Naive thymus-derived CD4-positive, alpha-beta T cell (primary cell): ENCODE measurements at regions of chr13 and their contacts with region 1.

Region 1: DNA sequence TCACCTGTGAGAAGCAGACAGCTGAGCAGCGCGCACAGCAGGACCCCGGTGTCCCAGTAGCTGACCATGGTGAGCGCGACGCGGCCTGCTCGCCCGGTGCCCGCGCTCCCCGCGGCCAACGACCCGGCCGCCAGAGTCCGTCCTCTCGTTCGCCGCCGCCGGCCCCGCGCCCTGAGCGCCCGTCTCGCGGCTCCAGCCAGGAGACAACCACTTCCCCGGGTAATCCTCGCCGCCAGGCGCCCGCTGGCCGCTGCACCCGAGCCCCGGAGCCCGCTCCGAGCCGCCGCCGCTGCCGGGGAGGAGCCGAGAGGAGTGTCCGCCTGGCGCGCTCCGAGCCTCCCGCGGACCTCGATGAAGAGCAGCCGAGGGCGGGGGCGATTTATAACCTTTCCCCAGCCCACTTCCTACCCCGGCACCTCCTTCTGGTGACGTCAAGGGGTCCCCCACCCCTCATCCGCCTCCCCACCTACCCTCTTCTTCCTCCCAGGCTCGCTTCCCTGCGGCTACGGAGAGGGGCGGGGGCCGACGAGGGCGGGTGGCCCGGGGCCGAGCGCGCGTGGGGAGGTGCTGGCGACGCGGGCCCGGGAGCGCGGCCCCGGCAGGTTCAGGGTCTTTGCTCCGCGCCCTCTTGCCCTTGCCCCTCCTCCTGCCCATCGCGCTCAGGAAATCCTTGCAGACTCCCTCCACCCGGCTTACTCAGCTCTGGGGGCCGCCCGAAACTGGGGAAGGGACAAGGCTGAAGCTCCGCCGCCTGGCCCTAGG is at the start of gene FLT1:
- DNase-seq: peak; percentile 27 to 65 (median 55)
- ATAC-seq: peak; percentile 39
- H3K4me3 ChIP-seq: peak within 1 kb of the TSS; percentile 44
- H3K4me3 Mint-ChIP-seq: peak within 1 kb of the TSS; percentile 23 to 85 (median 74)
- H3K27ac ChIP-seq: peak within 1 kb of the TSS; percentile 30
- H3K27ac Mint-ChIP-seq: peak within 1 kb of the TSS in 5 of 9 donors; percentile 28 to 76 (median 61)
- H3K4me1 ChIP-seq: peaks cover 0 to 13% of the 10 kb centered on the region in 2 donors
- H3K4me1 Mint-ChIP-seq: peaks cover 0 to 56% (median 37%) of the 10 kb centered on the region in 7 donors
- H3K27me3 ChIP-seq: no peaks in the 10 kb centered on the region
- H3K27me3 Mint-ChIP-seq: peaks cover 7 to 62% (median 52%) of the 10 kb centered on the region in 5 donors
- total RNA-seq, gene FLT1: 1.7 to 2.7 (median 2.3) TPM

Region 2: DNA sequence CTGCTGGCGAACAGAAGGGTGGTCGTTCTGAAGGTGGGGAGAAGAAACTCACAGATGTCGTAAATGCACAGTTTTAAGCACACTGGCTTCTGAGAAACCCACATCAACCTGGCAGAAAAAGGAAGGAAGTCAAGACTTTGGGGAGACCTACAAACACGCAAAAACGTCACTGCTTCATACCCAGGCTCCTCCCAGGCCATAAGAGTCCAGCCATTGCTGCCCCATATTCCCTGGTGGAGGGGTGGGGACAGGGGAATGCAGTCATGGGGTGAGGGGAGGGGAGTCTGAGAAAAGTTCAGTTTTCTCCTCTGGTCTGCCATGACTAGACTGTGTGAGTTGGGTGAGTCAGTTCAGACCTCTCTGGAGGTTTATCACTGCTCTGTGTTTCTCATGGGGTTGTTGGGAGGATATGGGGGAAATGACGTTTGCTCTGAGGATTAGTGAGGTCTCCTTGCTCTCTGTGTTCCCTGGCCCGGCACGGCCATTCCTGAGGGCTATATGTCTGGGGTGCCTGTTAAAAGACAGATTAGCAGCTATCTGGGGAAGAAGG is 139.1 kb before region 1 on chr13:
- CTCF ChIA-PET with region 1: no interaction called
- POLR2A ChIA-PET with region 1: no interaction called
- intact Hi-C with region 1: loop called in 1 of 2 experiments (anchors 10 kb)
- DNase-seq: peak in 2 of 9 donors; percentile 2 to 20
- ATAC-seq: peak; percentile 65
- H3K4me3 ChIP-seq: no peak overlapping the region
- H3K4me3 Mint-ChIP-seq: peak overlapping the region in 3 of 10 donors; percentile 35 to 77 (median 39)
- H3K27ac ChIP-seq: no peak overlapping the region
- H3K27ac Mint-ChIP-seq: peak overlapping the region in 1 of 9 donors; percentile 84
- H3K4me1 ChIP-seq: peaks cover 0 to 12% of the 10 kb centered on the region in 2 donors
- H3K4me1 Mint-ChIP-seq: peaks cover 9 to 47% (median 31%) of the 10 kb centered on the region in 7 donors
- H3K27me3 ChIP-seq: no peaks in the 10 kb centered on the region
- H3K27me3 Mint-ChIP-seq: peaks cover 0 to 4% (median 0%) of the 10 kb centered on the region in 5 donors

Region 3: DNA sequence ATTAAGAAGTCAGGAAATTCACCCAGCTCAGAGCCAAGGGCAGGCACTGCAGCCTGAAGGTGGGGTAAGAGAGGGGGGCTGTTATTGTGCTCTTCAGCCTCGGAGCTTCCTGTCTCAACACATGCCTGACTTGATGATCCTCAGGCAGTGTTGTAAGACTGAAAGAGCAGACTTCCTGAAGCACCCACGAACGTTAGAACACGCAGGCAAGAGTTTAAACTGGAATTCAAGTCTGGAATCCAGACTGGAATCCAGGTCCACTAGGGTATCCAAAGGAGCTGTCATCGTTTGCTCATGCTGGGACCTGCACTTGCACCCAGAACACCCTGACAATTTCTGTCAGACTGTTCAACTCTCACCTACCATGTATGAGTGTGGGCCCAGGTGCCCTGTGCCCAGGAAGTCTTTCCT is 10.7 kb after region 1 on chr13:
- CTCF ChIA-PET with region 1: interaction called, 3 read pairs
- POLR2A ChIA-PET with region 1: interaction called, 4 read pairs
- intact Hi-C with region 1: loop called in 1 of 2 experiments (anchors 1 kb)
- DNase-seq: peak in 5 of 9 donors; percentile 45 to 59 (median 50)
- ATAC-seq: peak; percentile 83
- H3K4me3 ChIP-seq: no peak overlapping the region
- H3K4me3 Mint-ChIP-seq: peak overlapping the region in 6 of 10 donors; percentile 13 to 59 (median 50)
- H3K27ac ChIP-seq: no peak overlapping the region
- H3K27ac Mint-ChIP-seq: peak overlapping the region in 8 of 9 donors; percentile 39 to 88 (median 79)
- H3K4me1 ChIP-seq: no peaks in the 10 kb centered on the region
- H3K4me1 Mint-ChIP-seq: peaks cover 7 to 14% (median 10%) of the 10 kb centered on the region in 7 donors
- H3K27me3 ChIP-seq: no peaks in the 10 kb centered on the region
- H3K27me3 Mint-ChIP-seq: peaks cover 0 to 14% (median 0%) of the 10 kb centered on the region in 5 donors

Region 4: DNA sequence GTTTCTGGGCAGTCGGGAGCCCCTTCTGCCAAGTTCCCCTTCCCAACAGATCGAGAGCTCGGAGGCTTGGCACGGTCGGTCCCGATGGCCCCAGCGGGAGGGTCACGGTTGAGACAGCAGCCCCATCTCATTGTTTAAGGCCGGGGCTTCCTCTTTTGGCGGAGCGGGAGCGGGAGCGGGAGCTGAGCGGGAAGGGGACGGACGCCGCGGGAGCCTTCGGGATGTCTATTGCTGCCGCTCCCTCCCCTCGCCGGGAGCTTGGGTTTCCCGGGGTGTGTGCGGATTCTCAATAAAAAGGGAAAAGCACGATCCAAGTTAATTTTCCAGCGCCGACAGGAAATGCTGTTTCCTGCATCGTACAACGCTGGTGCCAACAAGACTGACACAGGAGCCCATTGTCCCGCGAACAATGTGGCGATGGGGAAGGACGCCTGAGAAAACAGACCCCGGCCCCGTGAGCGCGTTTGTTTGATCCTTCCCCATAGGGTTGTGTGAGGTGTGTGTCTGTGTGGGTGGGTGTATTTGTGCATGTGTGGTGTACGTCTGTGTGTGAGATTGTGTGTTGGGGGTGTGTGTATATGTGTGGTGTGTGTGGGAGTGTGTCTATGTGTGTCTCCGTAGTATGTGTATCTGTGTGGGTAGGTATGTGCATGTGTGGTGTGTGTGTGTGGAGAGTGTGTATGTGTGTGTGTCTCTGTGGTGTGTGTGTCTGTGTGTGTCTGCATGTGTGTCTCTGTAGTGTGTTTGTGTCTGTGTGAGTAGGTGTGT is 36.3 kb after region 1 on chr13:
- CTCF ChIA-PET with region 1: interaction called, 3 read pairs
- POLR2A ChIA-PET with region 1: no interaction called
- intact Hi-C with region 1: loop called in 1 of 2 experiments (anchors 5 kb)
- DNase-seq: no peak
- ATAC-seq: no peak
- H3K4me3 ChIP-seq: no peak overlapping the region
- H3K4me3 Mint-ChIP-seq: no peak overlapping the region
- H3K27ac ChIP-seq: no peak overlapping the region
- H3K27ac Mint-ChIP-seq: no peak overlapping the region
- H3K4me1 ChIP-seq: peaks cover 0 to 9% of the 10 kb centered on the region in 2 donors
- H3K4me1 Mint-ChIP-seq: peaks cover 0 to 6% (median 0%) of the 10 kb centered on the region in 7 donors
- H3K27me3 ChIP-seq: peaks cover 0 to 24% of the 10 kb centered on the region in 2 donors
- H3K27me3 Mint-ChIP-seq: peaks cover 36 to 50% (median 38%) of the 10 kb centered on the region in 5 donors

Region 5: GRCh38 chr13:28548872-28549271 is 53.9 kb after region 1 on chr13:
- CTCF ChIA-PET with region 1: no interaction called
- POLR2A ChIA-PET with region 1: no interaction called
- intact Hi-C with region 1: no loop called
- DNase-seq: no peak
- ATAC-seq: no peak
- H3K4me3 ChIP-seq: no peak overlapping the region
- H3K4me3 Mint-ChIP-seq: no peak overlapping the region
- H3K27ac ChIP-seq: no peak overlapping the region
- H3K27ac Mint-ChIP-seq: peak overlapping the region in 1 of 9 donors; percentile 18
- H3K4me1 ChIP-seq: no peaks in the 10 kb centered on the region
- H3K4me1 Mint-ChIP-seq: no peaks in the 10 kb centered on the region
- H3K27me3 ChIP-seq: no peaks in the 10 kb centered on the region
- H3K27me3 Mint-ChIP-seq: peaks cover 6 to 33% (median 29%) of the 10 kb centered on the region in 5 donors

Region 6: GRCh38 chr13:28658796-28659620 is 164.1 kb after region 1 on chr13 and contains the start of gene POMP:
- CTCF ChIA-PET with region 1: no interaction called
- POLR2A ChIA-PET with region 1: interaction called, 3 read pairs
- intact Hi-C with region 1: loop called in 1 of 2 experiments (anchors 2 kb)
- DNase-seq: peak; percentile 83 to 96 (median 93)
- ATAC-seq: peak; percentile 95
- H3K4me3 ChIP-seq: peak within 1 kb of the TSS; percentile 86
- H3K4me3 Mint-ChIP-seq: peak within 1 kb of the TSS; percentile 88 to 100 (median 98)
- H3K27ac ChIP-seq: peak within 1 kb of the TSS; percentile 96
- H3K27ac Mint-ChIP-seq: peak within 1 kb of the TSS; percentile 94 to 99 (median 99)
- H3K4me1 ChIP-seq: peaks cover 25 to 29% of the 10 kb centered on the region in 2 donors
- H3K4me1 Mint-ChIP-seq: peaks cover 38 to 84% (median 69%) of the 10 kb centered on the region in 7 donors
- H3K27me3 ChIP-seq: no peaks in the 10 kb centered on the region
- H3K27me3 Mint-ChIP-seq: no peaks in the 10 kb centered on the region
- total RNA-seq, gene POMP: 18.8 to 97.0 (median 21.2) TPM

Region 7: DNA sequence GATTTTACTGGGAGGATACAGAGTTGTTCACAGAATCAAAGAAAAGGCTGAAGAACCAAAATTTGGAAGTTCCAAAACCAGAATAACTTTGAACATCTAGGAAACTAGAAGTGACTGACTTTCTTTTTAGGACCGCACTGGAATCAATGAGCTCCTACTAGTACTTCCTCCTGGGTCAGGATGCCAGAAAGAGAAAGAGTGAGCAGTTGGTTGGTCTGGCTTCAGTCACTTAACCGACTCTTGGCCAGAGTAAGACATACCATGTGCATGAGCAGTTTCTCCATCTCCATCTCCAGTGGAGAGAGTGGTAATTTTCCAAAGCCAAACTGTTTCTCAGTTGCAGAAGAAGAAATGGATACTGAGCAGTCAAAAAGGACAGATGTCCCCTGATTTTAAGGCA is 298.0 kb after region 1 on chr13:
- CTCF ChIA-PET with region 1: no interaction called
- POLR2A ChIA-PET with region 1: no interaction called
- intact Hi-C with region 1: loop called in 1 of 2 experiments (anchors 10 kb)
- DNase-seq: no peak
- ATAC-seq: no peak
- H3K4me3 ChIP-seq: no peak overlapping the region
- H3K4me3 Mint-ChIP-seq: no peak overlapping the region
- H3K27ac ChIP-seq: no peak overlapping the region
- H3K27ac Mint-ChIP-seq: no peak overlapping the region
- H3K4me1 ChIP-seq: no peaks in the 10 kb centered on the region
- H3K4me1 Mint-ChIP-seq: peaks cover 0 to 6% (median 4%) of the 10 kb centered on the region in 7 donors
- H3K27me3 ChIP-seq: no peaks in the 10 kb centered on the region
- H3K27me3 Mint-ChIP-seq: peaks cover 16 to 42% (median 30%) of the 10 kb centered on the region in 5 donors